Esophagus squamous epithelium (tissue), 5 donors: ENCODE measurements at regions of chr1 and their contacts with region 1.

Region 1: DNA sequence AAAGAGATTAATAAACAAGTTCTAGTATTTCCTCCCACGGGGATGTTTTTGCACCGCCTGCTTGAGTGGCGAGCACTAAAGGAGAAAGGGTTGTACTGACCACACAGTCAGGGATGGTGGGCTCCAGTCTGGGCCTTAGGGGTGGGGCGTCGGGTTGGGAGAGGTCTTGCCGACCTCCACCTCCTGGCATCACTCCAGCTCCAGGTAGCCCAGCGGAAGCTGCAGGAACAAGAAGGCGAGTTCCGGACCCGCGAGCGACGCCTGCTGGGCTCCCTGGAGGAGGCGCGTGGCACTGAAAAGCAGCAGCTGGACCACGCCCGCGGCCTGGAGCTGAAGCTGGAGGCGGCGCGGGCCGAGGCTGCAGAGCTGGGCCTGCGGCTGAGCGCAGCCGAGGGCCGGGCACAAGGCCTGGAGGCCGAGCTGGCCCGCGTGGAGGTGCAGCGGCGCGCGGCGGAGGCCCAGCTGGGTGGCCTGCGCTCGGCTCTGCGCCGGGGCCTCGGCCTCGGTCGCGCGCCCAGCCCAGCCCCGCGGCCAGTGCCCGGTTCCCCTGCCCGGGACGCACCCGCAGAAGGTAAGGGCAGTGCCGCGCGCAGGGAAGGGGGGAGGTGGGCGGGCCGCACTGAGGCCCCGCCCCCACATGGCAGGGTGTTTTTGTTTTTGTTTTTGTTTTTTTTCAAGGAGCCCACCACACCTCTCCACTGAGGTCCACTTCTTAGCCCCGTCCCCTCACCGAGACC is 19.7 kb downstream of the MFAP2 start:
- DNase-seq: no peak
- H3K4me3 ChIP-seq: peak overlapping the region; percentile 6 to 68 (median 38)
- H3K27ac ChIP-seq: peak overlapping the region; percentile 11 to 69 (median 47)
- H3K4me1 ChIP-seq: peaks cover 0 to 16% (median 0%) of the 10 kb centered on the region in 3 donors
- H3K27me3 ChIP-seq: no peaks in the 10 kb centered on the region
- CTCF ChIP-seq: peak; percentile 39 to 66 (median 52)
- POLR2A ChIP-seq: no peak

Region 2: DNA sequence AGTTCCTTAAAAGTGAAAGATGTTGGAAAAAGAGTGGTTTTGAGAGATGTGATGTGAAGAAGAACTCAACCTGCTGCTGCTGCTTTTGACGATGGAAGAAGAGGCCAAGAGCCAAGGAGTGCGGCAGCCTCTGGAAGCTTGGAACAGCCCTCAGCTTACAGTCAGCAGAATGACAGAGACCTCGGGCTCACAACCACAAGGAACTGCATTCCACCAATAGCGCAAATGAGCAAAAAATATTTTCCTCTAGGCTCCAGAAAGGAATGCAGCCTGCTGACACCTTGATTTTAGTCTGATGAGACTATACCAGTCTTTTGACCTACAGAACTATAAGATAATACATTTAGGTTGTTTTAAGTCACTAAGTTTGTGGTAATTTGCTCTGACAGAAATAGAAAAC is 82.9 kb after region 1 on chr1:
- intact Hi-C with region 1: loop called (anchors 5 kb)
- DNase-seq: no peak
- H3K4me3 ChIP-seq: no peak overlapping the region
- H3K27ac ChIP-seq: no peak overlapping the region
- H3K4me1 ChIP-seq: peaks cover 4 to 18% (median 7%) of the 10 kb centered on the region in 3 donors
- H3K27me3 ChIP-seq: no peaks in the 10 kb centered on the region
- CTCF ChIP-seq: no peak
- POLR2A ChIP-seq: no peak

Region 3: DNA sequence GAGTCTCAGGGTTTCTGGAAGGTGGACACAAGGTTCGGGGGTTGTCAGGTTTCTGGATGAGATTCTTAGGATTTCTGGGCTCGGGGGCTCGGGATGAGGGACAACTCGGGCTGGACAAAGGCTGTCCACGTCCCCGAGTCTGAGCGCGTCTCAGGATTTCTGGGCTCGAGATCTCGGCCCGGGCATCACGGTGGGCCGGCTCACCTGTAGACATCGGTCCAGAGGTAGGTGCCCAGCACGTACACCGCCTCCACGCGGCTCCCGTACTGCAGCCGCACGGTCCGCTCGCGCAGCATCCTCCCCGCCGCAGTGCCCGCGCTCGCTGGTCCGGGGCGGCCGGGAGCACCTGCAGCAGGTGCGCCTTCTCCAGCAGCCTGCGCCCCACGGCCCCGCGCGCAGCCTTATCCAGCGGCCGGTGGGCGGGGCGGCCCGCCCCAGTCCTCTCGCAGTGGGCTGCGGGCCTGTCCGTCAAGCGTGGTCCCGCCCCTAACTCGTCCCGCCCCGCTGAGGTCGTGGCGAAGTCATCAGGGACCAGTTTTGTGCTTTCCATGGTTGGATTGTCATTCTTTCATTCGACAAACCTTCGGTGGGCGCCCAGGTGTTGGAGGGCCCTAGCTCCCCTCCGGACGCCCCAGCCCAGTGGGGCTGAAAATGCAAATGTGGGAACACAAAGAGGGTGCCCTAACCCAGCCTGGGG is 158.5 kb after region 1 on chr1 and contains the start of gene PADI2:
- intact Hi-C with region 1: no loop called
- DNase-seq: no peak
- H3K4me3 ChIP-seq: peak within 1 kb of the TSS in 3 of 4 donors; percentile 16 to 57 (median 38)
- H3K27ac ChIP-seq: no peak within 1 kb of the TSS
- H3K4me1 ChIP-seq: peaks cover 13 to 25% (median 14%) of the 10 kb centered on the region in 3 donors
- H3K27me3 ChIP-seq: peaks cover 0 to 64% (median 9%) of the 10 kb centered on the region in 4 donors
- CTCF ChIP-seq: no peak
- POLR2A ChIP-seq: peak in 2 of 4 donors; percentile 42 to 47
- total RNA-seq, gene PADI2: 0.57 to 2.1 (median 1.1) TPM